A673 (cell line): ENCODE measurements at regions of chr7 and their contacts with region 1.

Region 1: GRCh38 chr7:26090927-26091519 is 61.0 kb upstream of the NFE2L3 start:
- DNase-seq: peak; percentile 86
- H3K4me3 ChIP-seq: peak overlapping the region; percentile 31
- H3K27ac ChIP-seq: peak overlapping the region; percentile 31
- H3K4me1 ChIP-seq: peaks cover 10% of the 10 kb centered on the region
- H3K27me3 ChIP-seq: no peaks in the 10 kb centered on the region
- CTCF ChIP-seq: peak; percentile 84

Region 2: DNA sequence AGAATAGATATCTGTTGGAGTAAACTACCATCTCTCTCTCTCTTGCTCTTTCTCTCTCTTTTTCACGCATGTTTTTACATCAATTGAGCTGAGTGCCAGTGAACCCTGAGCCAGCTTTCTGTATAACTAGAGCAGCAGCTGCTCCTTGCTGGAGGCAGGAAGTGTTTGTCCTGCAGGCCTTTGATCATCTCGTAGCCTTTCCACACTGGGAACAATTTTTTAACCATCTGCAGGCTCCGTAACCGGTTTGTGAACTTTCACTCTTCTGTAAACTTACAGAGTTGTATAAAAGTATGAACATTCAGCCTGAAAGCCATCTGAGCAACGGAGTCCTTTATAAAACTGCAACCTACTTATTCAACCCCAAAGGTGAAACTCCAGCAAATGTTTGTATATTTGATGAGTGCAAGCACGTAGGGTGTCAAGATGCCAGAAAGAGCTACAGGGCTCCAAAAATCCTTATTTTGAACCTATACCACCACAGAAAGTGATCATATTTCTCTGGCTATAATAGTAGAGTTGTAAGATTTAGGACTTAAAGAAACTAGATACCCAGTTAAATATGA is 101.8 kb before region 1 on chr7:
- CTCF ChIA-PET with region 1: no interaction called
- POLR2A ChIA-PET with region 1: no interaction called
- intact Hi-C with region 1: no loop called
- DNase-seq: no peak
- H3K4me3 ChIP-seq: no peak overlapping the region
- H3K27ac ChIP-seq: no peak overlapping the region
- H3K4me1 ChIP-seq: no peaks in the 10 kb centered on the region
- H3K27me3 ChIP-seq: no peaks in the 10 kb centered on the region
- CTCF ChIP-seq: no peak

Region 3: GRCh38 chr7:26167301-26167934 is 76.4 kb after region 1 on chr7:
- CTCF ChIA-PET with region 1: no interaction called
- POLR2A ChIA-PET with region 1: no interaction called
- intact Hi-C with region 1: no loop called
- DNase-seq: no peak
- H3K4me3 ChIP-seq: no peak overlapping the region
- H3K27ac ChIP-seq: no peak overlapping the region
- H3K4me1 ChIP-seq: no peaks in the 10 kb centered on the region
- H3K27me3 ChIP-seq: no peaks in the 10 kb centered on the region
- CTCF ChIP-seq: no peak

Region 4: DNA sequence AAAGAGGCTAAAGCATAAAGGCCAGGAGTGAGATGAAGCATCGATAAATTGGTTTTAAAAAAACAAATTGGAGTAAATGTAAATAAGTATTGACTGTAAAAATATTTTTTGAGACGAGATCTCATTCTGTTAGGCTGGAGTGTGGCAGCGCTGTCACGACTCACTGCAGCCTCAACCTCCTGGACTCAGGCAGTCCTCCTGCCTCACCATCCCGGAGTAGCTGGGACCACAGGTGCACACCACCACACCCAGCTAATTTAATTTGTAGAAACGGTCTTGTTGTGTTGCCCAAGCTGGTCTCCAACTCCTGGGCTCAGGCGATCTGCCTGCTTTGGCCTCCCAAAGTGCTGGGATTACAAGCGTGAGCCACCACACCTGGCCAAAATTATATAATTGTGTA is 91.7 kb after region 1 on chr7:
- CTCF ChIA-PET with region 1: interaction called, 4 read pairs
- POLR2A ChIA-PET with region 1: no interaction called
- intact Hi-C with region 1: loop called (anchors 1 kb)
- DNase-seq: no peak
- H3K4me3 ChIP-seq: no peak overlapping the region
- H3K27ac ChIP-seq: no peak overlapping the region
- H3K4me1 ChIP-seq: no peaks in the 10 kb centered on the region
- H3K27me3 ChIP-seq: no peaks in the 10 kb centered on the region
- CTCF ChIP-seq: no peak

Region 5: DNA sequence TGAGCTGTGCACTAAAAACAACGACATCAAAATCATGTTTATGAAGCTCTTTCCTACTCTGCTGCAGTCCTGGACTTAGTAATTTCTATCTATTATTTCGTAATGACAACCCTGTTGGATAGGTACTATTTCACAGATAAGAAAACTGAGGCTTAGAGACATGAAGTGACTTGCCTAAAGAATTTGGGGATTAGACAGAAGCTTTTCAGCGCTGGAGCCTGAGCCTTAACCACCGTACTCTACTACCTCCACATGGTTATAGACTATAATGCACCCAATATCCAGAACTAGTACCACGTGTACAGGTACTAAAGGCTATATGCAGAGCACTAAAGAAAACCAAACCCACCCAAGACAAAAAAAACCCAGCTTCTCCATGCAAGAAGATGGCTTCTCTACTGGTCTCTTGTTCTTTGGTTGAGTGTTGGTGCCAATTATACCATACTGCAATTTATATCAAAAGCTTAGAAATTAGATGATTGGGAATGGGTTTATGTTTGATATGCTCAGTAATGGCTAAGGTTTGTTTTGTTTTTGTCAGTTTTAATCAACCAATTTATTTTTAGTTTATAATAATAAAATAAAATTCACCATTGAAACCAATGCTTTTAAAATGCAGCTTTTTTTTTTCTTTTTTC is 194.1 kb after region 1 on chr7:
- CTCF ChIA-PET with region 1: no interaction called
- POLR2A ChIA-PET with region 1: no interaction called
- intact Hi-C with region 1: loop called (anchors 10 kb)
- DNase-seq: peak; percentile 62
- H3K4me3 ChIP-seq: no peak overlapping the region
- H3K27ac ChIP-seq: no peak overlapping the region
- H3K4me1 ChIP-seq: no peaks in the 10 kb centered on the region
- H3K27me3 ChIP-seq: no peaks in the 10 kb centered on the region
- CTCF ChIP-seq: peak; percentile 54